ENCODE measurements at regions of chr22 and their contacts with region 1.

Region 1: DNA sequence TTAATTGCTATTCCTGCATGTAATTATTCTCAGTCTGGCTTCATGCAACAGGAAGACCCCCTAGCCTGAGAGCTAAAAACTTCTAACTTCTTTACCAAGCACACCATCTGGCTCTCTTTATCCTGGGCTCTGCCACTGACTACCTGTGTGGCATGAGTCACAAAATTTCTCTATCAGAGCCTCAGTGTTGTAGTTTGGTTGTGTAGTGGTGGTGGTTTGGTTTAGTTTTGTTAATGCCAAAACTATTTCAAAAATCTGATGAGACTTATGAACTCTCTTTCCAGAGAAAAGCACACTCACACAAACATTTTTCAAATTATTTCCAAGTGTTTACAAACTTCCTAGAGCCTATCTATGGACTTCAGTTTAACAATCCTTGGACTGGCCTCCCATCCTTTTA is 7.5 kb upstream of the IL17RA start:
- DNase-seq: peak; percentile 70
- H3K4me3 ChIP-seq: no peak overlapping the region
- H3K27ac ChIP-seq: no peak overlapping the region
- H3K4me1 ChIP-seq: peaks cover 16% of the 10 kb centered on the region
- H3K27me3 ChIP-seq: no peaks in the 10 kb centered on the region
- CTCF ChIP-seq: no peak

Region 2: DNA sequence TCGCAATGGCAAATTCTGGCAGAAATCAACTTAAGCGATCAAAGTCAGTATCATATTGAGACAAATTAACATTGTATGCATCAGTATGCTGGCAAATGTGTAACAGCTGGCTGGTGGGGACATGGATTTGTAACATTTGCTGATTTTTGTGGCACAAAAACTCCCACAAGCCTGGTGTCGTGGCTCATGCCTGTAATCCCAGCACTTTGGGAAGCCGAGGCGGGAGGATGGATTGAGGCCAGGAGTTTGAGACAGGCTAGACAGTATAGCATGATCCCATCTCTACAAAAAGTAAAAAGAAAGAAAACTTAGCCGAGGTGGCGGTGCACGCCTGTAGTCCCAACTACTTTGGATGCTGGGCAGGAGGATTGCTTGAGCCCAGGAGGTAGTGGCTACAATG is 99.5 kb after region 1 on chr22:
- CTCF ChIA-PET with region 1: interaction called, 8 read pairs
- dilution Hi-C with region 1: no loop called
- in situ Hi-C with region 1: loop called in 1 of 2 experiments (anchors 5 kb)
- intact Hi-C with region 1: loop called (anchors 1 kb)
- DNase-seq: no peak
- H3K4me3 ChIP-seq: no peak overlapping the region
- H3K27ac ChIP-seq: no peak overlapping the region
- H3K4me1 ChIP-seq: peaks cover 4% of the 10 kb centered on the region
- H3K27me3 ChIP-seq: no peaks in the 10 kb centered on the region
- CTCF ChIP-seq: no peak

Region 3: GRCh38 chr22:17368554-17369438 is 291.5 kb after region 1 on chr22:
- CTCF ChIA-PET with region 1: no interaction called
- dilution Hi-C with region 1: no loop called
- in situ Hi-C with region 1: no loop called
- intact Hi-C with region 1: loop called (anchors 10 kb)
- DNase-seq: no peak
- H3K4me3 ChIP-seq: no peak overlapping the region
- H3K27ac ChIP-seq: no peak overlapping the region
- H3K4me1 ChIP-seq: no peaks in the 10 kb centered on the region
- H3K27me3 ChIP-seq: peaks cover 24% of the 10 kb centered on the region
- CTCF ChIP-seq: no peak

Region 4: GRCh38 chr22:17501679-17502285 is 424.5 kb after region 1 on chr22:
- CTCF ChIA-PET with region 1: no interaction called
- dilution Hi-C with region 1: no loop called
- in situ Hi-C with region 1: loop called (anchors 5 to 10 kb)
- intact Hi-C with region 1: loop called (anchors 1 kb)
- DNase-seq: peak; percentile 53
- H3K4me3 ChIP-seq: no peak overlapping the region
- H3K27ac ChIP-seq: no peak overlapping the region
- H3K4me1 ChIP-seq: no peaks in the 10 kb centered on the region
- H3K27me3 ChIP-seq: peaks cover 2% of the 10 kb centered on the region
- CTCF ChIP-seq: peak; percentile 49 to 67